ENCODE measurements at regions of chr13 and their contacts with region 1.

Region 1: DNA sequence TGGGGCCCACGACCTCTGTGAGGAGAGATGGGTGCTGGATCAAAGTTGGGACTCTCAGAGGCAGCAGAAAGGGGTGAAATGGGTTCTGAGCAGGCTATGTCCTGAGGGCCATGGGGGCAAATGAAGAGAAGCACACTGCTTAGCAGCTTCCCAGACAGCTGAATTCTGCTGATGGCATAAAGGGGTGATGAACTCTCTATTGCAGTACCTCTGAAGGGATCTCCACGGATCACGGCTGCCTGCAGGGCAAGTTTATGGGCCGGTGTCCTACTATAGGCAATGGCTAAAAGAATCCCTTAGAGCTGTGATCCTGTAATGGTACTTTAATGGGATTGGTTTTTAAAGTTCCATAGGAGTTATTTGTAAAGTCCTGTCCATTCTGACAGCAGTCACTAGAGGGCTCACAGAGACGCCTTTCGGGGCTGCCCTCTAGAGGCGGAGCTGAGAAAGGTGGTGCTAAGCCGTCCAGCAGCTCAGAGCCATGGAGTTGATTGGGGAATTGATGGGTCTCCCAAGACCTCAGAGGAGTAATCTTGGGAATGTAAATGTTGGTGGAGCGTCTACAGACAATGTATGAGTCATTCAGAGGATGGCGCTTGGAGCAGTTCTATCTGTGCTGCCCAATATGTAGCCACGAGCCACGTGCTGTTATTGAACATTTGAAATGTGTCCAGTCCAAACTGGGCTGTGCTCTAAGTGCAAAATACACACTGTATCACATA is 287.3 kb downstream of the COG6 start:
- DNase-seq: peak; percentile 85
- ATAC-seq: peak; percentile 98
- H3K4me3 Mint-ChIP-seq: no peak overlapping the region
- H3K27ac Mint-ChIP-seq: no peak overlapping the region
- H3K4me1 Mint-ChIP-seq: peaks cover 10% of the 10 kb centered on the region
- H3K27me3 Mint-ChIP-seq: no peaks in the 10 kb centered on the region

Region 2: DNA sequence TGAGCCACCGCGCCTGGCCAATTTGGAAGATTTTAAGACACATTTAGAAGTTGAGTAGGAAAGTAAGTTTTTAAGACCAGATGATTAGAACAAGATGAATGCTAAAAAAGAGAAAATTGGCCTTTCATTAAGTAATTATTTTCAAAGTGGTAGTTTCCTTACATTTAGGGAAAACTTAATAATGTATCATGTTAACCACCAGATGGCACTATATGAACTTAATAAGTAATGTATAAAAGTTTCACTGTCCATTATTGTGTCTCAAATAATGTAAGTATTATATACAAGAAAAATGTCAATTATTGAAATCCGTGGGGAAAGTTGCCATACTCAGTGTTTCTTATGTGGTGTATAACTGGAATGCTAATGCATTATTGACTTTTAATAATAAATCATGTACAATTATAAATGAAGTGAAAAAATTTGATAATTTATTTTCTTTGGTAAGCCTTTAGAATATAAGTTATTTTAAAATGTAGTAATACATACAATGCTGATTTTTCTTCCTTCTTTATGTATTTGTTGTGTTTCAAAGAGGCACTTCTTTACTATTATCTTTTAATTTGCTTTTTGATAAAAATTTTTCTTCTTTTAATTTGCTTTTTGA is 258.1 kb before region 1 on chr13:
- CTCF ChIA-PET with region 1: interaction called, 3 read pairs
- POLR2A ChIA-PET with region 1: no interaction called
- intact Hi-C with region 1: loop called (anchors 2 to 10 kb)
- DNase-seq: no peak
- ATAC-seq: no peak
- H3K4me3 Mint-ChIP-seq: no peak overlapping the region
- H3K27ac Mint-ChIP-seq: no peak overlapping the region
- H3K4me1 Mint-ChIP-seq: peaks cover 21% of the 10 kb centered on the region
- H3K27me3 Mint-ChIP-seq: no peaks in the 10 kb centered on the region

Region 3: GRCh38 chr13:39965309-39965708 is 22.6 kb after region 1 on chr13:
- CTCF ChIA-PET with region 1: interaction called, 12 read pairs
- POLR2A ChIA-PET with region 1: no interaction called
- intact Hi-C with region 1: no loop called
- DNase-seq: no peak
- ATAC-seq: no peak
- H3K4me3 Mint-ChIP-seq: no peak overlapping the region
- H3K27ac Mint-ChIP-seq: no peak overlapping the region
- H3K4me1 Mint-ChIP-seq: peaks cover 7% of the 10 kb centered on the region
- H3K27me3 Mint-ChIP-seq: peaks cover 4% of the 10 kb centered on the region

Measured in activated CD4-positive, alpha-beta T cell treated with anti-CD3 and anti-CD28 coated beads for 36 hours (primary cell).